ENCODE measurements at regions of chr10 and their contacts with region 1.

Region 1: DNA sequence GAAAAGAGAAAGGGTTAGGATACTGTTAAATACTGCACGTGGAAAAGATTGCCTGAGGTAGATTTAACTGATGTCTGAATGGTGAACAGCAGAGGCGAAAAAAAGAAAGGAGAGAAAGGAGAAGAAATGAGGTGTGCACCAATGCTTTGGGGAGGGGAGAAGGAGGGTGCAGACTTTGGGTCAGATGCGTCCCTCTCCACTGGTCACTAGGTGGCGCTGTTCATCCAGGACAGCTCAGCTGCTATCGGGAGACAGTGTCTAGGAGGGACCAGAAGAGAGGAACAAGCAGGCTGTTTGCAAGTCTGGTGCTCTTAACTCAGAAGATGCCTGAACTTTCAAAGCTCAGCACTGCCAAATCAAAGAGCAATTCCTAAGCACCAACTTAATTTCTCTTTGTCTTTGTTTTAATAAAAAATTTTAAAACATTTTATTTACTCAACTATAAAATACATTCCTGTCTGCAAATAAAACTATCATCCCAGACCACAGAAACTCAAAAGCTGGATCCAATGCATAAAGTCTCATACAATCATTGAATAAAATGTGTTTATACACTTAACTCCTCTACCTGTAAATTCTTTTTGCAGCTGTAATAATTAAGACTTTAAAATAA is 83.9 kb upstream of the PDLIM1 start:
- DNase-seq: no peak

Region 2: GRCh38 chr10:95391581-95392216 is 17.0 kb after region 1 on chr10:
- intact Hi-C with region 1: loop called (anchors 2 kb)
- DNase-seq: no peak

Region 3: DNA sequence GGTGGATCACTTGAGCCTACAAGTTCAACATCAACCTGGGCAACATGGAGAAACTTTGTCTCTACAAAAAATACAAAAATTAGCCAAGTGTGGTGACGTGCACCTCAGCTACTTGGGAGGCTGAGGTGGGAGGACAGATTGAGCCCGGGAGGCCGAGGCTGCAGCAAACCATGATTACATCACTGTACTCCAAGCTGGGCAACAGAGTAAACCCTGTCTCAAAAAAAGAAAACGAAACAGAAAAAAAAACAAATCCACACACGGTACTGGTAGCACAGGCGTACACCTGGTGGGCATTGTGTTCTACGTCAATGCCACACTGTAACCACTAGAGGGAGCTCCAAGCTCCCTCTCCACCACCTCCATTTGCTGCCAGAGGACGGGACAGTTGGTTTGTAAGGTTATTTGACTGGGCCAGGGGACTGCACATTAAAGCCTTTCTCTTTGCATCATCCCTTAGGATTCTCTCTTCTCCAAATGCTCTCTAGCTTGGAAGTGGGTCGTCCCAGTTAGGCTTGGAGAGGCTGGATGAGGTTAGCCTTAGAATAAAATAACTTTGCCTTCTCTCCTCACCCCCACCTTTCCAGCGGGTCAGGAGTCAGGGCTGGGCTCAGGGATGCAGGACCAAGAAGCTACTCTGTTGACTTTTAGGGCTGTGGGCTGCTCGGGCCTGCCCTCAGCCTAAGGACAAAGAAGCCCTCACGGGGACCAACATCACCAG is 55.7 kb after region 1 on chr10:
- intact Hi-C with region 1: loop called (anchors 2 kb)
- DNase-seq: no peak

Region 4: DNA sequence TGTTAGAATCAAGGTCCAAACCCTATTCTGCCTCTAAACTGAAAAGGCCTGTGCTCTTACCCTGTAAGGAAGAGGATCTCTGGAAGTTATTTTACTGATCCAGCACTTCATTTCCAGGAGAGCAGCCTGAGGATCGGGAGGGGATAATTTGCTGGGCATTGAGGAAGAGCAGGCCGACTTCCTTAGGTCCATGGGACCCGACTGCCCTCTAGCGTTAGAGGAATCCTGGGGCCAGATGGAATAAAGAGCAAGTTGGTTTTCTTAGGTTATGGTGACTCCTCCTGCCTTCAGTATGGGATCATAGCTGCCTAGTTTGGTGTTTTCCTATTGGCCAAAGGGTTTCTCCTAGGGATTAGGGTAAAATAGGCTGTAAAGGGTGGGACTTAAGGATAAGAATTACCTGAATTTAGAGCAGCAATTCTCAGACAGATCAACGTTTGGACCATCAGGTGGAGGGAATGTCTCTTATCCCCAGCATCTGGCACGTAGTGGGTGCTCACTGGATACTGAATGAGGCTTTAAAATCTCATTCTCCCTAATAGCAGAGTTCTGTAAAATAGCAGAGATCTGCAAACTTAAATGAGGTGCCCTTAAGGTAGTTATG is 226.5 kb after region 1 on chr10:
- intact Hi-C with region 1: loop called (anchors 1 kb)
- DNase-seq: peak; percentile 86

Region 5: DNA sequence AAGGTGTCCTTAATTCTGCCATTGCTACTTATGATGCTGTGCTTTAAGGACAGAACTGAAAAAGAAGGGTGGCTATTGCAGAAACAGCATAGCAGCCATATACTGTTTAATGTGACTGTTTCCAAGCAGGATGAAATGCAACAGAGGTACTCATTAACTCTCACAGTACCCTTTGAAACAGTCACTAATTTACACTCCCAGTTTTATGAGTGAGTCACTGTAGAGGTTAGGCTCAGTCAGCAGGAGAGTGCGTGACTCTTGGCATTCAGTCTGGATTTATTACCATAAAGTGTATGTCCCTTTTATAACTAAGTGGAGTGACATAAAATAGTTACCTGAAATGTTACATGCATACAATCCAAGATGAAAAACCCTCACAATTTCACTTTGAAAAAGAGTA is 254.1 kb after region 1 on chr10:
- intact Hi-C with region 1: no loop called
- DNase-seq: no peak

Region 6: GRCh38 chr10:95864906-95865813 is 490.5 kb after region 1 on chr10:
- intact Hi-C with region 1: loop called (anchors 10 kb)
- DNase-seq: no peak

Measured in cardiac septum (tissue), 1 donor.